BJ (cell line): ENCODE measurements at regions of chr11 and their contacts with region 1.

Region 1: DNA sequence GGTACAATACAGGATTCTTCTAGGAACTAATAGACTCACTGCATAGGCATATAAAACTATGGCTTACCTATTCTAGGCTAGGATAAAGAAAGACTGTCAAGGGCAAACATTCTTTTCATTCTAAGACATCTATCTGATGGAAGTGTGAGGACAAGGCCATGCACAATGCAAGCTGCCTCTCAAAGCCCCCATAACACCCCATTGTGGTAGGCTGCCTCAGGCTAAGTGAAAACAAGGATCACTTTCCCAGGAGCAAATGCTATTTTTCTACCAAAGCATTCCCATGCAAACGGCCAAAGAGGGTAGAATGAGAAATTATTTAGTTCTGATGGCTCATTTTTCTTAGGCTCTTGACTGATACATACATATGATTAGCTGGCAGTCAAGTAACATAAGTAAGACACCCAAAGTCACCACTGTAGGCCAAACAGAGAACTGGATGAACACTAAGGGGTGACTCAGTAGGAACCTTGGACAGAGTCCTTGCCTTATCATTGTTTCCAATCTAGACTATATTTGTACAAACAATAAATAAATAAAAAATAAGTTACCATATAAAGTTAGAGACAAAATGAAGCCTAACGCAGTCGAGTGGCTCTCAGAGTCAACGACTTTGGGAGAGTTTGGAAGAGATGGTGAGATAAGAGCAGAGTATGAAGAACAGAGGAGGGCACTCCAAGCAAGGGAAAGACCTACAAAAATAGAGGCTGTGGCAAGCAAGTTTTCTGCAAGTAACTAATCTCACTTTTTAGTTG is 303.6 kb downstream of the SBF2 start:
- DNase-seq: no peak
- H3K4me3 ChIP-seq: no peak overlapping the region
- H3K27me3 ChIP-seq: no peaks in the 10 kb centered on the region
- CTCF ChIP-seq: peak; percentile 14; the same call in 1 of the 2 replicates

Region 2: GRCh38 chr11:9922806-9923205 is 67.6 kb before region 1 on chr11:
- CTCF ChIA-PET with region 1: no interaction called
- POLR2A ChIA-PET with region 1: no interaction called
- DNase-seq: no peak
- H3K4me3 ChIP-seq: no peak overlapping the region
- H3K27me3 ChIP-seq: no peaks in the 10 kb centered on the region
- CTCF ChIP-seq: no peak

Region 3: DNA sequence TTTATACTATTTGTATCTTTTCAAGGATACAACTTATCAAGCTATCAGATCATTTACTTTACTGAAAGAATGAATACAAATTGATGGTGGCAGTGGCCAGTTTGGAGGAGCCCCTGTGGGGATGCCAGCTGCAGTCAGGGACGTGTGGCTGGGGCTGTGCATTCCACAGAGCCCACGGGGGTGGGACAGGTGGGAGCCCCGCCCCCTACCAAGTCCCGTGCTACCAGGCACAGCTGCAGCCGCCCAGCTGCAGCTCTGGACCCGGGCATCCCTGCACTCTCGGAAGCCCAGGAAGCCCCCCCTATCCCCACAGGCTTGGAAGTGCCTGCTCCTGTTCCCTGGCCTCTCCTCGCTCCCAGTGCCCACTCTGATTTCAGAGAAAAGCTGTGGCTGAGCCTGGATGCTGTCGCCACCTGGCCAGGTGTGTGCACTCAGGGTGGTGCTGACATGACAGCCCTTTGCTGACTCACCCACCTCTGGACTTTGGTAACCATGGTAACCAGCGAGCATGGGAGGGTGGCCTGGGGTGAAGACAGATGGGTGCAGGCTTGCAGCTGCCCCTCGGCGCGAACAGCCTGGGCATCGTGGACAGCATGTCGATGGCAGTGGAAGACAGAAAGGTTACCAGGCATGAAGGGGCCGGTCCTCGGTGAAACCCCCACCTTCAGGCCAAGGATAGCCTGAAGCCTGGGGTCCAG is 165.5 kb after region 1 on chr11:
- CTCF ChIA-PET with region 1: no interaction called
- POLR2A ChIA-PET with region 1: interaction called, 18 read pairs
- DNase-seq: no peak
- H3K4me3 ChIP-seq: no peak overlapping the region
- H3K27me3 ChIP-seq: no peaks in the 10 kb centered on the region
- CTCF ChIP-seq: no peak